Psoas muscle (tissue), 8 donors: ENCODE measurements at regions of chr11 and their contacts with region 1.

Region 1: GRCh38 chr11:86869966-86870570 is 69.7 kb downstream of the PRSS23 start:
- DNase-seq: peak; percentile 56 to 57
- ATAC-seq: peak; percentile 69 to 91 (median 78)
- H3K4me3 ChIP-seq: no peak overlapping the region
- H3K27ac ChIP-seq: no peak overlapping the region
- H3K4me1 ChIP-seq: no peaks in the 10 kb centered on the region
- H3K27me3 ChIP-seq: no peaks in the 10 kb centered on the region
- CTCF ChIP-seq: peak; percentile 84

Region 2: GRCh38 chr11:86904001-86904400 is 33.9 kb after region 1 on chr11:
- intact Hi-C with region 1: no loop called
- DNase-seq: no peak
- ATAC-seq: no peak
- H3K4me3 ChIP-seq: no peak overlapping the region
- H3K27ac ChIP-seq: no peak overlapping the region
- H3K4me1 ChIP-seq: no peaks in the 10 kb centered on the region
- H3K27me3 ChIP-seq: no peaks in the 10 kb centered on the region
- CTCF ChIP-seq: no peak

Region 3: DNA sequence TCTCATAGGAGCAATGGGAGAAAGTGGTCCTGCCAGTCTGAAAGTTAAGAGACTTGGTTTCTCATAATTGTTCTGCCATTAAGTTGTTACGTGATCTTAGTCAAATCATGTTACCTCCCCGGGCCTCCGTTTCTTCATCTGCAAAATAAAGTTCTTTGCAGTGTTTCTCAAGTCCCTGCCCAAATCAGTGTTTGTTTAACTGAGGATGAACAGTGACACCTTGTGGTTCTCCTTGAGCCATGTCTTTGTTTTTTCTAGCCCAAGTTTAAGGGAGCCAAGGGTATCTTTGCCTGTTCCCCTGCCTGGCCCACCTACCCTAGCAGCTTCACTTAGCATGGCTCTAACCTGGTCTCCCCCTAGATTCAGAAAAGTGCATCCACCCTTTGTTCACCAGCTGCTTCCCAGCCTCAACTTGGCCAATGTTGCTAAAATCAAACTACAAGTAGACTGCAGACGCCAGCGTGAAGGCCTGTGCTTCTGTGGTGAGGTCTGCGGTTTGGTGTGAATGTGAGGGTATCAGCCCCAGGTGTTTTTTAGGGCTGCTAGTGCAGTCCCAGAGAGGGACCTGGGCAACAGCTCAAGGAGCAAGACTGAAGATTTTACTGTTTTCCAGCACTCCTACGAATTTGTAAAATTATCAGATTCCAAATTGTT is 49.6 kb after region 1 on chr11:
- intact Hi-C with region 1: loop called (anchors 2 to 5 kb)
- DNase-seq: no peak
- ATAC-seq: peak in 3 of 4 donors; percentile 46 to 71 (median 61)
- H3K4me3 ChIP-seq: no peak overlapping the region
- H3K27ac ChIP-seq: peak overlapping the region; percentile 52
- H3K4me1 ChIP-seq: peaks cover 3% of the 10 kb centered on the region
- H3K27me3 ChIP-seq: no peaks in the 10 kb centered on the region
- CTCF ChIP-seq: peak; percentile 58

Region 4: DNA sequence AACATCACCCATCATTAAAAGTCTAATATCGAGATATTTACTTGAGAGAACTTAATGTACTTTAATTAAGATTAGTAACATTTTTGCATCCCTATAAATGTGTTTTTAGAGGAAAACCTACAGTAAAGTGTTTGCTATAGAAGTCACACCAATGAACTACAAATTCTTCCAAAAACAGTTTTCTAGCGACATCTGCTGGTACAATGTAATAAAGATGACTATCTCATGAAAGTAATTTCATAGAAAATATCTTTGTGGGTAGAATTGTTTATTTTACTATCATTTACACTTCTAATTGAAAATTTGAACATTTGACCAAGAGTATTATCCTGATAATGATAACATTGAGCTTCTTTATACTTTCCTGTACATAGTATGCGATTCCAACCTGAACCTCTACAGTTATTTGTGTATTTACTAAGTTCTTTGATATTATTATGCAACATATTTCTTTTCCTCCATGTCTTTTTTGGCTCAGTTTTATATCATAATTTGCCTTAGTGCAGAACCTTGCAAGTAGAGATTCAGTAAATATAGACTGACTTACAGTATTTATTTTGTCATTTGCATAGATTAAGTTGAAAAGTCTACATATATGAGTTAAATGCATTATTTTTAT is 420.3 kb after region 1 on chr11:
- intact Hi-C with region 1: loop called (anchors 2 to 5 kb)
- DNase-seq: no peak
- ATAC-seq: peak in 2 of 4 donors; percentile 47 to 74
- H3K4me3 ChIP-seq: no peak overlapping the region
- H3K27ac ChIP-seq: no peak overlapping the region
- H3K4me1 ChIP-seq: no peaks in the 10 kb centered on the region
- H3K27me3 ChIP-seq: no peaks in the 10 kb centered on the region
- CTCF ChIP-seq: peak; percentile 74

Region 5: DNA sequence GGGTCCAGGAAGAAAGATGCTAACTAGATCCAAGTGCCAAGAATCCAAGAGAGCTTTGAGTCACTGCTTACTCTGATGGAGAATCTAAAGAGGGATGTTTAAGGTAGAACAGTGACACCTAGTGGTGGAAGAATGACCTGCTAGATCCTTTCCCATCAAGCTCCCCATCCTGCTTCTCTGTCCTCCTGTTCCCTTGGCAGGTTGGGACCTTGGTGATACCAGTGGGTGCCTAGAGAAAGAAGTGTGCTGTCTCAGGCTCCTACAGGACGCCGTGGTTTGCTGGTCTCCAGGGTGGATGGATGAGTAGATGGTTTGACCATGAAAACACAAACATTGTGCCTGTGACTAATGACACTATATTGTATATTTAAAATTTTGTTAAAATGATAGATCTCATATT is 551.4 kb after region 1 on chr11:
- intact Hi-C with region 1: loop called in 1 of 2 experiments (anchors 10 kb)
- DNase-seq: no peak
- ATAC-seq: peak; percentile 75 to 92 (median 86)
- H3K4me3 ChIP-seq: no peak overlapping the region
- H3K27ac ChIP-seq: no peak overlapping the region
- H3K4me1 ChIP-seq: peaks cover 8% of the 10 kb centered on the region
- H3K27me3 ChIP-seq: no peaks in the 10 kb centered on the region
- CTCF ChIP-seq: peak; percentile 84